Activated B cell treated with CpG ODN at 0.5 μM for 24 hours (primary cell): ENCODE measurements at regions of chr14 and their contacts with region 1.

Region 1: DNA sequence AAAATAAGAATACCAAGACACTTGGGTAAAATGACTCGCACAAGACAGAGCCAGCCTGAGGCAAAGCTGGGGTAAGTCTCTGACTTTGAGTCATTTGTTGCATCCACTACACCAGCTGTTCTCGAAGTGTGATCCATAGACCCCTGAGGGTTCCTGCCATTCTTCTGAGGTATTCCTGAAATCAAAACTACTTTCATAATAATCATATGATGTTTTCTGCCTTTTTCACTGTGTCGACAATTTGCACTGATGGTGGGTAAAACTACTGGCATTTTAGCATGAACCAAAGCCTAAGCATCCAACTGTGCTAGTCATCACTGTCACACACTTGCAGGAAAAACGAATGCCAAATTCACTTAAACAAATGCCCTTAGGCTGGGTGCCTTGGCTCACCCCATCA is 135.5 kb upstream of the FUT8 start:
- DNase-seq: no peak
- ATAC-seq: no peak
- H3K4me3 Mint-ChIP-seq: no peak overlapping the region
- H3K27ac Mint-ChIP-seq: no peak overlapping the region
- H3K4me1 Mint-ChIP-seq: peaks cover 17% of the 10 kb centered on the region
- H3K27me3 Mint-ChIP-seq: no peaks in the 10 kb centered on the region
- CTCF ChIP-seq: no peak

Region 2: DNA sequence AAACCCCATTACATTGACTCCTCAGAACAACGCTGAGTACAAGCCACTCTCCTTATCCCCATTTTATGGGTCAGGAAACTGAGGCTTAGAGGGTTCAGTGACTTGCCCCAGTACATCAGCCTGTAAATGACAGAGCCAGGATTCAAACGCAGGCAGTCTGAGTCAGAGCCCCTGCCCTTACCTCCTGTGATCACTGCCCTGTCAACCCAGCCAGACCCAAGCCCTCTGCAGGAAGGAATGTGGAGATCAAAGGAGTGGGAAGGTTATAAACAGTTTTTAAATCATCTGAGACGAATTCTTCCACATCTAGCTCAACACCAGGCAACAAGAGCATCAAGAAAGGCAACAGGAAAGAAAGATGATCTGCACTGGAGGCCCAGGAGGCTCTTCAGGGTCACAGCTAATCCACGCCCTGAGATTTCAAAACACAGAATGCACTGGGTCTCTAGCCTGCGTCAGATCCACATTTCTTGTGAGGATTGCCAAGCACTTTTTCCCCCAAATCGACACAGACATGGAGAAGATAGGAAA is 435.8 kb before region 1 on chr14:
- CTCF ChIA-PET with region 1: no interaction called
- POLR2A ChIA-PET with region 1: no interaction called
- intact Hi-C with region 1: no loop called
- DNase-seq: no peak
- ATAC-seq: no peak
- H3K4me3 Mint-ChIP-seq: no peak overlapping the region
- H3K27ac Mint-ChIP-seq: no peak overlapping the region
- H3K4me1 Mint-ChIP-seq: peaks cover 6% of the 10 kb centered on the region
- H3K27me3 Mint-ChIP-seq: peaks cover 28% of the 10 kb centered on the region
- CTCF ChIP-seq: no peak

Region 3: GRCh38 chr14:64906022-64906421 is 371.0 kb before region 1 on chr14:
- CTCF ChIA-PET with region 1: no interaction called
- POLR2A ChIA-PET with region 1: no interaction called
- intact Hi-C with region 1: loop called (anchors 5 kb)
- DNase-seq: no peak
- ATAC-seq: no peak
- H3K4me3 Mint-ChIP-seq: no peak overlapping the region
- H3K27ac Mint-ChIP-seq: no peak overlapping the region
- H3K4me1 Mint-ChIP-seq: no peaks in the 10 kb centered on the region
- H3K27me3 Mint-ChIP-seq: peaks cover 34% of the 10 kb centered on the region
- CTCF ChIP-seq: no peak